CD4-positive, alpha-beta memory T cell (primary cell): ENCODE measurements at regions of chr19 and their contacts with region 1.

Region 1: DNA sequence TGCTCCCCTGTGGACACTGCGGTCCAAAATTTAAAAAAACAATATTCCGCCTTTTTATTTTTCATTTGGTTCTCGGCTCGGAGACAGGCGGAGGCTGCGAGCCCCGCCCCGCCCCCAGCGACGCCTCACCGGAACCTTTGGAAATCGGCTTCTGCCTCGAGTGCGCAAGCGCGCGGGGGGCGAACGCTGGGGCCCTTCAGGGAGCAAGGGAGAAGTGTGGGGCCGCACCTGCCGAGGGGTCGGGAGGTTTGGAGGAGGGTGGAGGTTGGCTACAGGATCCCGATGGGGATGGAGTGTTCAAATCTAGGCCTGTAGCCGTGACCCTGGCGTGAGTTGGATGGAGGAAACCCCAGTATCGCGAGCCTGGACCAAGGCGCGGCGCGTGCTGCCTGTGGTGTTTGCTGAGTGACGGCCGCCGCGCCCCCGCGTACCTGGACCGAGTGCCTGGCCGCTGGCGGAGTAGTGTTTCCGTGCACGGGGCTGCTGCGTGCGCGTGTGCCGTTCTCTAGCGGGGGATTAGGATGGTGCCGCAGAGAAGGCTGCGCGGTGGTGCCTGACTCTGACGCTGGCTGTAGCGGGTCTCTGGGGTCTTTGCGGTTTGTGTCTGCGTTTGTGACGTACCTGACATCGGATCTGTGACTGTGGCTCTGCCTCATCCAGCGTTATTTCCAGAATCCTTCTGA is 565 bp upstream of the ZFP30 start:
- DNase-seq: peak; percentile 83 to 85 (median 85)
- H3K4me3 ChIP-seq: peak overlapping the region; percentile 73 to 78
- H3K4me3 Mint-ChIP-seq: peak overlapping the region; percentile 83 to 96 (median 95)
- H3K27ac ChIP-seq: peak overlapping the region; percentile 81
- H3K27ac Mint-ChIP-seq: peak overlapping the region; percentile 92 to 98 (median 95)
- H3K4me1 ChIP-seq: peaks cover 20% of the 10 kb centered on the region
- H3K4me1 Mint-ChIP-seq: peaks cover 18 to 40% (median 26%) of the 10 kb centered on the region in 4 donors
- H3K27me3 ChIP-seq: no peaks in the 10 kb centered on the region
- H3K27me3 Mint-ChIP-seq: no peaks in the 10 kb centered on the region

Region 2: GRCh38 chr19:37309834-37310575 is 345.8 kb before region 1 on chr19:
- CTCF ChIA-PET with region 1: no interaction called
- POLR2A ChIA-PET with region 1: no interaction called
- intact Hi-C with region 1: loop called (anchors 10 kb)
- DNase-seq: peak in 3 of 5 donors; percentile 31 to 39 (median 38)
- H3K4me3 ChIP-seq: no peak overlapping the region
- H3K4me3 Mint-ChIP-seq: no peak overlapping the region
- H3K27ac ChIP-seq: no peak overlapping the region
- H3K27ac Mint-ChIP-seq: peak overlapping the region in 1 of 7 donors; percentile 10
- H3K4me1 ChIP-seq: peaks cover 5% of the 10 kb centered on the region
- H3K4me1 Mint-ChIP-seq: peaks cover 9 to 19% (median 13%) of the 10 kb centered on the region in 4 donors
- H3K27me3 ChIP-seq: no peaks in the 10 kb centered on the region
- H3K27me3 Mint-ChIP-seq: peaks cover 1 to 5% of the 10 kb centered on the region in 2 donors

Region 3: DNA sequence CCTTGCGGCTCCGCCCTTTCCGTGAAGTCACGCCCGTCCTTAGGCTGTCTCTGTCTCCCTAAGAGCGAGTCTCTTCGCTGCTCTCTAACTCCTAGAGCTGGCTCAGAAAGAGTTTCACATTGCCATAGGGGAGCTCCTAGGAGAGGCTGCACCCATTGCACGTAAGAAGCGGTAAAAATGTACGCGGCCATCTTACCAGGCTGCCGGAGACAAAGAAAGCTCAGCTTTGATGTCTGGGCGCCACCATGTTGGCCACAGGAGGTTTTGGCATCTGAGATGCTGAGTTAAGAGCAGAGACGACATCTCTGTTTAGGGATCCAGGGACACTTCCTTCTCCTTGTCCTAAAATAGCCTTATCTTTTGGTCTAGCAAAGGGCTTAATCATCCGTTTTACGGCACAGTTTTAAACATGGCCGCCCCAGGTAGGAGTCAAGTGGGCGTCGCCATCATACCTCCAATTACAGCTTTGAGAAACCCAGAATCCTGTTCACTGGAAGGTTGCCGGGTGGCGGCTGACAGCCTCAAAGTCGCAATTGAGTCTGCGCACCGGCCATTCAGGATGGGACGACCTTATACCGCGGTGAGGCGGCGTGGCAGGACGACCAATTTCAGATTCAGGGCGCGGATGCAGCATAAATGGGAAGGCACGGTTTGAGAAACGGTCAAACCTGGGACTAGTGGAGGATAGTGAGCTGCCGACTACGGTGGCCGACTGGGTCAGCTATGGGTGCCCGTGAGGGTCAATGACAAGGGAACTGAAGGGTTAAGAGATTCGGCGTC is 149.3 kb before region 1 on chr19 and contains the start of gene ZNF793:
- CTCF ChIA-PET with region 1: no interaction called
- POLR2A ChIA-PET with region 1: interaction called, 3 read pairs
- intact Hi-C with region 1: loop called (anchors 2 kb)
- DNase-seq: peak; percentile 85 to 88 (median 87)
- H3K4me3 ChIP-seq: peak within 1 kb of the TSS; percentile 57 to 78
- H3K4me3 Mint-ChIP-seq: no peak within 1 kb of the TSS
- H3K27ac ChIP-seq: peak within 1 kb of the TSS; percentile 88
- H3K27ac Mint-ChIP-seq: no peak within 1 kb of the TSS
- H3K4me1 ChIP-seq: peaks cover 17% of the 10 kb centered on the region
- H3K4me1 Mint-ChIP-seq: peaks cover 0 to 2% (median 0%) of the 10 kb centered on the region in 4 donors
- H3K27me3 ChIP-seq: no peaks in the 10 kb centered on the region
- H3K27me3 Mint-ChIP-seq: no peaks in the 10 kb centered on the region
- total RNA-seq, gene ZNF793: 10.2 to 13.8 TPM

Region 4: GRCh38 chr19:37635076-37636056 is 20.5 kb before region 1 on chr19:
- CTCF ChIA-PET with region 1: no interaction called
- POLR2A ChIA-PET with region 1: no interaction called
- intact Hi-C with region 1: no loop called
- DNase-seq: no peak
- H3K4me3 ChIP-seq: no peak overlapping the region
- H3K4me3 Mint-ChIP-seq: no peak overlapping the region
- H3K27ac ChIP-seq: no peak overlapping the region
- H3K27ac Mint-ChIP-seq: no peak overlapping the region
- H3K4me1 ChIP-seq: no peaks in the 10 kb centered on the region
- H3K4me1 Mint-ChIP-seq: no peaks in the 10 kb centered on the region
- H3K27me3 ChIP-seq: no peaks in the 10 kb centered on the region
- H3K27me3 Mint-ChIP-seq: no peaks in the 10 kb centered on the region

Region 5: GRCh38 chr19:37691881-37692504 is 36.2 kb after region 1 on chr19:
- CTCF ChIA-PET with region 1: no interaction called
- POLR2A ChIA-PET with region 1: interaction called, 7 read pairs
- intact Hi-C with region 1: loop called (anchors 2 kb)
- DNase-seq: peak; percentile 70 to 78 (median 73)
- H3K4me3 ChIP-seq: peak overlapping the region; percentile 61 to 80
- H3K4me3 Mint-ChIP-seq: peak overlapping the region; percentile 84 to 98 (median 95)
- H3K27ac ChIP-seq: peak overlapping the region; percentile 49
- H3K27ac Mint-ChIP-seq: peak overlapping the region; percentile 79 to 97 (median 93)
- H3K4me1 ChIP-seq: peaks cover 6% of the 10 kb centered on the region
- H3K4me1 Mint-ChIP-seq: peaks cover 4 to 22% (median 10%) of the 10 kb centered on the region in 4 donors
- H3K27me3 ChIP-seq: no peaks in the 10 kb centered on the region
- H3K27me3 Mint-ChIP-seq: no peaks in the 10 kb centered on the region

Region 6: GRCh38 chr19:37719111-37719926 is 63.5 kb after region 1 on chr19 and contains the start of gene ZNF607:
- CTCF ChIA-PET with region 1: no interaction called
- POLR2A ChIA-PET with region 1: no interaction called
- intact Hi-C with region 1: loop called (anchors 1 kb)
- DNase-seq: peak; percentile 73 to 79 (median 78)
- H3K4me3 ChIP-seq: peak within 1 kb of the TSS; percentile 48 to 94
- H3K4me3 Mint-ChIP-seq: peak within 1 kb of the TSS; percentile 89 to 94 (median 92)
- H3K27ac ChIP-seq: peak within 1 kb of the TSS; percentile 59
- H3K27ac Mint-ChIP-seq: peak within 1 kb of the TSS; percentile 31 to 97 (median 95)
- H3K4me1 ChIP-seq: peaks cover 19% of the 10 kb centered on the region
- H3K4me1 Mint-ChIP-seq: peaks cover 7 to 19% (median 12%) of the 10 kb centered on the region in 4 donors
- H3K27me3 ChIP-seq: no peaks in the 10 kb centered on the region
- H3K27me3 Mint-ChIP-seq: no peaks in the 10 kb centered on the region
- total RNA-seq, gene ZNF607: 11.8 to 13.0 TPM

Region 7: DNA sequence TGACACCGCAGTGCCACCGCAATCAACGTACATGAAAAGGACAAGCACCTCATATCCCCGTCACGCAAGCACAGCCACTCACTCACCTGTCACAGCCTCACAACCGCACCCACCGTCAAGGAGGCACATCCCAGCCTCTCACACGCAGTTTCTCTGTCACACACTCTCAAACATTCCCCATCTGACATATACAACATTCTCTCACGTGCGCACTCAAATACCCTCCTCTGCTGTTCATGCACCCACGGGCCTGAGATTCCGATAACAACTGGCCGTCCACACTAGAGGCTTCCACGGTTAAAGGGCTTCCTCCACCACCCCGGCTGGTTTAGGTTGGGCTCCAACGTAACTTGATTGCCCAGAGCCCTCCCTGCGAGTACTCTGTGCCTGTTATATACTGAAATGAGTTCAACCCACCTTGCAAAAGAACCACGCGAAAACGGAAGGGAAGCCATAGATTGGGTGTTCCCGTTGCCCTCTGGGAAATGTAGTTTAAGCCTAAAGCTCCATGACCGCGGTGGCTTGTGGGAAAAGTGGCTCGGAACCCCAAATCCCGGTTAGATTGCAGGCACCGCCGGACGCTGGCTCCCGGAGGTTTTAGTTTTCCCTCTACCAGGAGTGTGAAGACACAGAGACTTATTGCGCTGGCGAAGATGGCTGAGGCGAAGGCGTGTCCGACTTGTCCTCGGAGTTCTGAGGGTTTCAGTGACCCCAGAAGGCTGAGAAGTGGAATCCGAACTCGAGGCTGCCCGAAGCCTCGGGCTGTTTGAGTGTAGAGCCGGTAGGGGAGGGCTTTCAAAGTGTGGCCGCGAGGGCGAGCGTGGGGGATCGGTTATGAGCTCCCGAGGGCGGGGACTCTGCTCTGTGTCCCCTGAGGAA is 123.5 kb after region 1 on chr19 and contains the start of gene ZNF573:
- CTCF ChIA-PET with region 1: no interaction called
- POLR2A ChIA-PET with region 1: no interaction called
- intact Hi-C with region 1: loop called (anchors 2 kb)
- DNase-seq: peak; percentile 87 to 99 (median 91)
- H3K4me3 ChIP-seq: peak within 1 kb of the TSS; percentile 74 to 89
- H3K4me3 Mint-ChIP-seq: peak within 1 kb of the TSS; percentile 90 to 99 (median 94)
- H3K27ac ChIP-seq: peak within 1 kb of the TSS; percentile 90
- H3K27ac Mint-ChIP-seq: peak within 1 kb of the TSS; percentile 86 to 100 (median 98)
- H3K4me1 ChIP-seq: peaks cover 18% of the 10 kb centered on the region
- H3K4me1 Mint-ChIP-seq: peaks cover 24 to 46% (median 35%) of the 10 kb centered on the region in 4 donors
- H3K27me3 ChIP-seq: no peaks in the 10 kb centered on the region
- H3K27me3 Mint-ChIP-seq: no peaks in the 10 kb centered on the region
- total RNA-seq, gene ZNF573: 30.5 to 31.1 TPM